ENCODE measurements at regions of chr16 and their contacts with region 1.

Region 1: DNA sequence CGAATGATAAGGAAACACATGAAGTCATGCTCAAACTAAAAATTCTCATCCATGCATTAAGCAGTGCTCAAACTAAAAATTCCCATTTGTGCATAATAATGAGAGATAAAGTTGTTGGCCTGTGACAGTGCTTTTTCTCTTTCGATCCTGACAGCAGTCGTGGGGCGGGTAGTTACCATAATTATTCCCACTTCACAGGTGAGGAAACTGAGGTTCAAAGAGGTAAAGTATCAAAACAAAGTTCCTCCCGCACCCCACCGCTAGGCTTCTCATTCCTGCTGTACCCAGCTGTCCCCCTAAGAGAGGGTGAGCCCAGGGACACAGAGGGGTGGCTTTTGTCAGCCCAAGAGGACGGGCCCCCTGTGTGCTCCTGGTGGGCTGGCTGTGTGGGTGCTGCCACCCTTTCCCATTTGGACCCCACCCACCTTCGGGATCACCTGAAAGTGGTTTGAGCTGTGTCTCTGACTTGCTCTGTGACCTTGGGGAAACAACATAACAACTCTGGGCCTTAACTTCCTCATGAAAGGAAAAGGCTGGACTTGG is 92.6 kb downstream of the CLEC16A start:
- DNase-seq: no peak
- ATAC-seq: no peak
- H3K4me3 ChIP-seq: no peak overlapping the region
- H3K27ac ChIP-seq: no peak overlapping the region
- H3K4me1 ChIP-seq: no peaks in the 10 kb centered on the region
- H3K27me3 ChIP-seq: no peaks in the 10 kb centered on the region
- CTCF ChIP-seq: no peak

Region 2: DNA sequence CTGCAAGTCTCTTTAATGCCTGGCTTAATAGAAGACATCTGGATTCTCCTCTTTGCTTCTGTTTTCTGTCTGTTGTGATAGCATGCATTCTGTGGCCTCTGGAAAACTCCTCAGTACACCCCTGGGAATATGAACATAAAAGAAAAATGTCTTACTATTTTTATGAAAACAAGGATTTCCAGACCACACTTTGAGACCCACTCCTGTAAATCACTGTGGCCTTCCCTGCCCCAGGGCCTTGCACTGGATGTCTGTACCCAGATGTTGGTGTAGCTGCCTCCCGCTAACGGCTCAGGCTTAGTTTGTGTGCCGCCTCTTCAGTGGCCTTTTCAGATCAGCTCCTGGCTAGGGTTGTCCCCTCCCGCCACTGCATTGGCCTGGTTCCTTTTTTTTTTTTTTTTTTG is 92.4 kb after region 1 on chr16:
- CTCF ChIA-PET with region 1: no interaction called
- POLR2A ChIA-PET with region 1: interaction called, 10 read pairs
- in situ Hi-C with region 1: no loop called
- intact Hi-C with region 1: no loop called
- DNase-seq: no peak
- ATAC-seq: no peak
- H3K4me3 ChIP-seq: no peak overlapping the region
- H3K27ac ChIP-seq: no peak overlapping the region
- H3K4me1 ChIP-seq: peaks cover 18% of the 10 kb centered on the region
- H3K27me3 ChIP-seq: no peaks in the 10 kb centered on the region
- CTCF ChIP-seq: no peak

Measured in Panc1 (cell line).